Breast epithelium (tissue), 4 donors: ENCODE measurements at regions of chr7 and their contacts with region 1.

Region 1: DNA sequence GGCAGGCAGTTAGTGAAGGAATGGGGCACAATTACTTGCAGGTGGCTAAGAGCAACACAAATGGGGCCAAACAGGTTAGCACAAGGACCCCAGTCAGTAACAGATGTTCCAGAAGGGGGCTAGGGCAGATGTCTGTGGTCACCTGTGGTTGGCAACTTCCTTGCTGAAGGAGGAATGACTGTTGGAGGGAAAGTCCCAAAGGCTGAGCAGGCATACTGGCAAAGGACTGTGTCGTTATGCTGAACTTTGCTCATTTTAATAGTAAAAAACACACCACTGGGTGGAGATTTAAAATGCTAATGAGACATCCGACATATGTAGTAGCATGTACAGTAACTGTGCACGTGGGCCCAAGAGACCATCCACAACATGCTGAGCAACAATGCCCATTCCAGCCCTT is 511.6 kb downstream of the CALN1 start:
- DNase-seq: no peak
- H3K4me3 ChIP-seq: no peak overlapping the region
- H3K27ac ChIP-seq: no peak overlapping the region
- H3K4me1 ChIP-seq: no peaks in the 10 kb centered on the region
- H3K27me3 ChIP-seq: no peaks in the 10 kb centered on the region
- CTCF ChIP-seq: no peak
- POLR2A ChIP-seq: no peak

Region 2: GRCh38 chr7:71937840-71938371 is 37.4 kb after region 1 on chr7:
- intact Hi-C with region 1: loop called (anchors 1 kb)
- DNase-seq: no peak
- H3K4me3 ChIP-seq: no peak overlapping the region
- H3K27ac ChIP-seq: no peak overlapping the region
- H3K4me1 ChIP-seq: no peaks in the 10 kb centered on the region
- H3K27me3 ChIP-seq: no peaks in the 10 kb centered on the region
- CTCF ChIP-seq: no peak
- POLR2A ChIP-seq: no peak

Region 3: GRCh38 chr7:72313906-72314305 is 413.4 kb after region 1 on chr7:
- intact Hi-C with region 1: loop called (anchors 10 kb)
- DNase-seq: no peak
- H3K4me3 ChIP-seq: no peak overlapping the region
- H3K27ac ChIP-seq: no peak overlapping the region
- H3K4me1 ChIP-seq: no peaks in the 10 kb centered on the region
- H3K27me3 ChIP-seq: no peaks in the 10 kb centered on the region
- CTCF ChIP-seq: no peak
- POLR2A ChIP-seq: no peak